HCT116 (cell line): ENCODE measurements at regions of chr9 and their contacts with region 1.

Region 1: GRCh38 chr9:131008909-131009618 is at the start of gene LAMC3:
- DNase-seq: no peak
- ATAC-seq: peak; percentile 89
- H3K4me3 ChIP-seq: peak within 1 kb of the TSS; percentile 50 to 59
- H3K27ac ChIP-seq: no peak within 1 kb of the TSS; the same call in 1 of the 2 replicates
- H3K4me1 ChIP-seq: peaks cover 3 to 14% of the 10 kb centered on the region in 2 experiments
- H3K27me3 ChIP-seq: no peaks in the 10 kb centered on the region
- CTCF ChIP-seq: peak; percentile 30 to 61 (median 50); a peak in 5 of 6 replicates
- POLR2A ChIP-seq: no peak
- RAD21 ChIP-seq: peak; percentile 62
- total RNA-seq, gene LAMC3: 7.7 TPM

Region 2: DNA sequence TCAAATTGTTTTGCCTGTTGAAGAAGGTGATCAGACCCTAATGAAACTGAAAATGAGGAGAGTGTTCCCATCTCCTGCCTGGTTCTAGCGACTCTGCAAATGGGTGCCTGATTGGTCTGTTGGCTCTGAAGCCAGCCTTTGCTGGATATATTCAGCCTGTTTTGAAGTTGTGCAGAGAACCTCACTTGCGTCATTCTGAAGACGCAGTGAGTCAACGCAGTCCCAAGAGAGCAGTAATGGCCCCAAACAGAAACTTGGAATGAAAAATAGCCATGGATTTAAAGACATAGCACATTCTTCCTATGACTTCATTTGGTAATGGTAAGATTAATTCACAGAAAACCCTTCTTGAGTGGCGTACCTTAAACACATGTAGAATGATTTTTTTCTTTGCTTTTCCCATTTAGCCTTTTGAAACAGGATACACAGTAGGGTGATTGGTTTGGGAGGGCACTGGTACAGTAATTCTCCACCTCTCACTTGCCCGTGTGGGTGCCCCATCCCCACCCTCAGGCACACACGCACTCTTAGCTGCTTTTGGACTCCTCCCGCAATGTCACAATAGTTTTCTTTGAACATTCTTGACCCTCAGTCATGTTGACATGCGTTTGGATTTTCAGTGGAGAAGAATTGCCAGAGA is 228.1 kb before region 1 on chr9:
- CTCF ChIA-PET with region 1: no interaction called
- POLR2A ChIA-PET with region 1: no interaction called
- RAD21 ChIA-PET with region 1: no interaction called
- intact Hi-C with region 1: loop called (anchors 10 kb)
- DNase-seq: no peak
- ATAC-seq: no peak
- H3K4me3 ChIP-seq: no peak overlapping the region
- H3K27ac ChIP-seq: no peak overlapping the region
- H3K4me1 ChIP-seq: no peaks in the 10 kb centered on the region; a peak in 1 of 4 replicates
- H3K27me3 ChIP-seq: no peaks in the 10 kb centered on the region
- CTCF ChIP-seq: no peak
- POLR2A ChIP-seq: no peak
- RAD21 ChIP-seq: no peak

Region 3: DNA sequence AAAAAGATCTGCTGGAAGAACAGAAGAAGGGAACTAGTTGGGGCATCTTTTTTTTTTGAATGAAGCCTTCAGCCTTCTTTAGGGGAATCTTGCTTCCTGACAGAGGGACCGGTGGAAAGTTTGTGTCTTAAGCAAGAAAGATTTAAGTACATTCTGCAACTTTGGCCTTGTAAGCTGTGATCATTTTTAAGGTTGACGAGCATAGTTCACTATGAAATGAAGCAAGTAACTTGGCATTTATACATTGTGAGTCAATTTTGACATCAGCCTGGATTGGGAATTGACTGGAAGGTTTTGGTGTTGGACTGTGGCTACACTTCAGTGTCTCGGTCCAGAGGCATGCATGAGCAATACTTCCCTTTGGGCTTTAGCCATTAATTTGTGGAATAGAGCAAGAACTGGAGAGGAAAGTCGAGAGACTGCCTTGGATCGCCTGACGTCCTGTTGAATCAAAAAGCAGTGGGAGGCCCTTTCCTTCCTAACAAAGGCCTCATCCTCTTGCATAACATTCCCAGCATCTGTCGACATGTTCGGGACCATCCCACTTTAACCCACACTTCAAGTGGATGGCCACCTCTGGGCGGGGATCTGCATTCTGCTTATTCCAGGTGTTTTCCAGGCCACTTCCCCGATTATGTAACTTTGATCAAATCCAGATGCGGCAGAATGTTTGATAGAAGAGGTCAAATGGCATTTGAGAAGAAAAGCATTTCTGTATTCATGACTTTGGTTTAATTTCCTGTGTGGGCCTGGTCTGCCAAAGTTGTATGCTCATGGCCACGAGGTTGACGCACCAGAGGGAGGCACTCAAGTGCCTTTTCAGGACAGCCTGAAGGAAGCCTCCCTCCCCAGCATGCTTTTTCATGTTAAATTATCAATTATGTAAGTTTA is 161.5 kb before region 1 on chr9:
- CTCF ChIA-PET with region 1: no interaction called
- POLR2A ChIA-PET with region 1: no interaction called
- RAD21 ChIA-PET with region 1: no interaction called
- intact Hi-C with region 1: no loop called
- DNase-seq: no peak
- ATAC-seq: peak; percentile 51
- H3K4me3 ChIP-seq: no peak overlapping the region; a peak in 1 of 4 replicates
- H3K27ac ChIP-seq: peak overlapping the region; percentile 77
- H3K4me1 ChIP-seq: peaks cover 41 to 45% of the 10 kb centered on the region in 2 experiments
- H3K27me3 ChIP-seq: no peaks in the 10 kb centered on the region
- CTCF ChIP-seq: peak in 2 of 3 experiments; percentile 20 to 31; a peak in 2 of 6 replicates
- POLR2A ChIP-seq: no peak
- RAD21 ChIP-seq: no peak